K562 (cell line): ENCODE measurements at regions of chr9 and their contacts with region 1.

Region 1: DNA sequence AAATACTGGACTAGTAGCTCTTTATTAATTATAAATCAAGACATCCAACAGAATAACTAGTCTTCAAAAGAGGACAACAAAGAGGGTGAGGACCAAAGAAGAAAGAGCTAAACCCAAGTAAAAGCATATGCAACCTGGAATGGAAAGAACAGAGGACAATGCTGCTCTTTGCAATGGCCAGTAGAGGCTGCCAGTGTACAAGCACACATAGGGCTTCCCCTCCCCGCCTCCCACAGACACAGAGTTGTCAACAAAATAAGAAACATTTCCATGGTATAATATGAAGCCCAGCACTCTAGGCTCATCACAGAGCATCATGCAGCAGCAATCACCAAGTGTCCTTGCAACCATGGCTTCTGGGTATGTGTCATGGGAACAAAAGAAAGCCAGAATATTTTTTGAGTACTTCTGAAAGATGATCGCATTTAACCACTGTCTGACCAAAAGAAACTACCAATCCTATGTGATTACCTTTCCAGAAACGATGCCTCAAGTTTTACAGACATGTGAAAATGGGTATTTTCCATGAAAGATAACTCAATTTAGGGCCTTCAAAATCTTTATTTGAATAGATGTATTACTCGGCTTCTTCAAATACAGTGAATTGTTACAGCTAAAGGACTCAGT is 58.1 kb downstream of the RFX3 start:
- DNase-seq: peak; percentile 9 to 70 (median 26)
- ATAC-seq: peak; percentile 99
- H3K4me3 ChIP-seq: no peak overlapping the region
- H3K27ac ChIP-seq: no peak overlapping the region
- H3K4me1 ChIP-seq: no peaks in the 10 kb centered on the region; a peak in 2 of 5 replicates
- H3K27me3 ChIP-seq: no peaks in the 10 kb centered on the region
- CTCF ChIP-seq: peak; percentile 77 to 87 (median 87)
- EP300 ChIP-seq: no peak
- POLR2A ChIP-seq: no peak
- RAD21 ChIP-seq: peak; percentile 86 to 88

Region 2: GRCh38 chr9:2857564-2858198 is 610.0 kb before region 1 on chr9:
- CTCF ChIA-PET with region 1: no interaction called
- POLR2A ChIA-PET with region 1: no interaction called
- in situ Hi-C with region 1: no loop called
- intact Hi-C with region 1: loop called (anchors 10 kb)
- DNase-seq: peak; percentile 37 to 64 (median 44)
- ATAC-seq: peak; percentile 86
- H3K4me3 ChIP-seq: no peak overlapping the region
- H3K27ac ChIP-seq: no peak overlapping the region
- H3K4me1 ChIP-seq: no peaks in the 10 kb centered on the region
- H3K27me3 ChIP-seq: peaks cover 0 to 5% of the 10 kb centered on the region in 2 experiments; a peak in 2 of 5 replicates
- CTCF ChIP-seq: peak; percentile 58 to 74 (median 66)
- EP300 ChIP-seq: no peak
- POLR2A ChIP-seq: no peak
- RAD21 ChIP-seq: peak; percentile 32 to 68

Region 3: GRCh38 chr9:3331817-3332216 is 135.9 kb before region 1 on chr9:
- CTCF ChIA-PET with region 1: no interaction called
- POLR2A ChIA-PET with region 1: no interaction called
- in situ Hi-C with region 1: no loop called
- intact Hi-C with region 1: loop called (anchors 10 kb)
- DNase-seq: peak in 2 of 4 experiments; percentile 8 to 12
- ATAC-seq: 0 out of 3 replicates have a peak, but pooled peaks have one; percentile 52
- H3K4me3 ChIP-seq: no peak overlapping the region
- H3K27ac ChIP-seq: no peak overlapping the region
- H3K4me1 ChIP-seq: peaks cover 0 to 4% of the 10 kb centered on the region in 2 experiments; a peak in 1 of 5 replicates
- H3K27me3 ChIP-seq: no peaks in the 10 kb centered on the region
- CTCF ChIP-seq: peak; percentile 19 to 40 (median 34); a peak in 3 of 6 replicates
- EP300 ChIP-seq: no peak
- POLR2A ChIP-seq: no peak
- RAD21 ChIP-seq: peak in 1 of 2 experiments; percentile 31; a peak in 2 of 4 replicates

Region 4: GRCh38 chr9:3525836-3526164 is 58.1 kb after region 1 on chr9 and contains the start of gene RFX3:
- CTCF ChIA-PET with region 1: no interaction called
- POLR2A ChIA-PET with region 1: interaction called, 3 read pairs
- in situ Hi-C with region 1: no loop called
- intact Hi-C with region 1: loop called (anchors 2 kb)
- DNase-seq: peak; percentile 75 to 90 (median 81)
- ATAC-seq: peak; percentile 64
- H3K4me3 ChIP-seq: peak within 1 kb of the TSS; percentile 82
- H3K27ac ChIP-seq: peak within 1 kb of the TSS; percentile 100
- H3K4me1 ChIP-seq: peaks cover under 1 to 4% of the 10 kb centered on the region in 2 experiments; a peak in 1 of 5 replicates
- H3K27me3 ChIP-seq: no peaks in the 10 kb centered on the region
- CTCF ChIP-seq: no peak
- EP300 ChIP-seq: no peak
- POLR2A ChIP-seq: no peak
- RAD21 ChIP-seq: no peak
- polyA plus RNA-seq, gene RFX3: 1.4 TPM

Region 5: GRCh38 chr9:3647652-3648051 is 179.9 kb after region 1 on chr9:
- CTCF ChIA-PET with region 1: no interaction called
- POLR2A ChIA-PET with region 1: no interaction called
- in situ Hi-C with region 1: no loop called
- intact Hi-C with region 1: loop called (anchors 1 kb)
- DNase-seq: no peak
- ATAC-seq: no peak
- H3K4me3 ChIP-seq: no peak overlapping the region
- H3K27ac ChIP-seq: no peak overlapping the region
- H3K4me1 ChIP-seq: no peaks in the 10 kb centered on the region
- H3K27me3 ChIP-seq: no peaks in the 10 kb centered on the region
- CTCF ChIP-seq: peak in 2 of 3 experiments; percentile 15 to 33; a peak in 1 of 6 replicates
- EP300 ChIP-seq: no peak
- POLR2A ChIP-seq: no peak
- RAD21 ChIP-seq: peak; percentile 20 to 27; a peak in 2 of 4 replicates

Region 6: GRCh38 chr9:3698076-3698475 is 230.4 kb after region 1 on chr9:
- CTCF ChIA-PET with region 1: no interaction called
- POLR2A ChIA-PET with region 1: no interaction called
- in situ Hi-C with region 1: loop called (anchors 25 kb)
- intact Hi-C with region 1: no loop called
- DNase-seq: no peak
- ATAC-seq: no peak
- H3K4me3 ChIP-seq: no peak overlapping the region
- H3K27ac ChIP-seq: no peak overlapping the region
- H3K4me1 ChIP-seq: no peaks in the 10 kb centered on the region
- H3K27me3 ChIP-seq: no peaks in the 10 kb centered on the region; a peak in 1 of 5 replicates
- CTCF ChIP-seq: no peak
- EP300 ChIP-seq: no peak
- POLR2A ChIP-seq: no peak
- RAD21 ChIP-seq: no peak

Region 7: DNA sequence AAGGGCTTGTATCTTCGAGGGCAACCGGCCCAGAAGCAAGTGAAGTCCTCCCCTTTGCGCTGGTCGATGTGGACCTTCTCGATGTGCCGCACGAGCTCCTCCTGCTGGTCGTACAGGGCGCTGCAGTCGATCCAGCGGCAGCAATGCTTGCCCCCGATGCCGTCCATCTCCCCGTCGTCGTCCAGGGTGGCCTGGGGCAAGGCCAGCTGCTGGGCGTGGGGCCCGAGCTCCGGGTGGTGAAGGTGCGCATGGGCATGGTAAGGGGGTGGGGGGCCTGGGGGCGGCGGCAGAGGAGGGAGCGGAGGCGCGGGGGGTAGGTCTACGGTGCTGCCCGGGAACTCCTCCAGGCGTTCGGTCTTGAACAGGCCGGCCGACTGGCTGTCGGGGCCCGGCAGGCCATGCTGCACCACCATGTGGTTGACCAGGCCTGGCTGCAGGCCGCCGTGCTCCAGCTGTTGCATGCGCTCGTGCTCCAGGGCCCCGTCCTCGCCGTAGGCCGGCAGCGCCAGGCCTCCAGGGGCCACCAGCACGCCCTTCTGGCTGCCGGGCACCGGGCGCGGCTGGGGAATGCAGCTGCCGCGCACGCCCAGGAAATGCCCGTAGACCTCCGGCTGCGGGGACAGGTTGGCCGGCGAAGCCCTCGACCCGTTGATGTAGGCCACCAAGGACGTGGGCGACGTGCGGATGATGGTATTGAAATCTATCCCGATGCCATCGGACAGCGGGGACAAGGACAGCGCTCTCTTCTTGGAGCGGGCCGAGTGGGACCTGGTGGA is 650.3 kb after region 1 on chr9:
- CTCF ChIA-PET with region 1: no interaction called
- POLR2A ChIA-PET with region 1: no interaction called
- in situ Hi-C with region 1: loop called (anchors 25 kb)
- intact Hi-C with region 1: loop called (anchors 5 kb)
- DNase-seq: peak; percentile 48 to 61 (median 53)
- ATAC-seq: peak; percentile 91
- H3K4me3 ChIP-seq: no peak overlapping the region
- H3K27ac ChIP-seq: no peak overlapping the region
- H3K4me1 ChIP-seq: peaks cover 0 to 8% of the 10 kb centered on the region in 2 experiments; a peak in 1 of 5 replicates
- H3K27me3 ChIP-seq: no peaks in the 10 kb centered on the region
- CTCF ChIP-seq: peak; percentile 65 to 75 (median 69)
- EP300 ChIP-seq: no peak
- POLR2A ChIP-seq: no peak
- RAD21 ChIP-seq: peak; percentile 46 to 62